PC-3 (cell line): ENCODE measurements at regions of chr4 and their contacts with region 1.

Region 1: GRCh38 chr4:169225058-169225751 is 45.6 kb downstream of the SH3RF1 start:
- DNase-seq: peak; percentile 90
- ATAC-seq: peak; percentile 84
- H3K4me3 ChIP-seq: peak overlapping the region; percentile 52
- H3K27ac ChIP-seq: peak overlapping the region; percentile 99
- H3K4me1 ChIP-seq: peaks cover 49% of the 10 kb centered on the region
- H3K27me3 ChIP-seq: no peaks in the 10 kb centered on the region
- CTCF ChIP-seq: no peak

Region 2: DNA sequence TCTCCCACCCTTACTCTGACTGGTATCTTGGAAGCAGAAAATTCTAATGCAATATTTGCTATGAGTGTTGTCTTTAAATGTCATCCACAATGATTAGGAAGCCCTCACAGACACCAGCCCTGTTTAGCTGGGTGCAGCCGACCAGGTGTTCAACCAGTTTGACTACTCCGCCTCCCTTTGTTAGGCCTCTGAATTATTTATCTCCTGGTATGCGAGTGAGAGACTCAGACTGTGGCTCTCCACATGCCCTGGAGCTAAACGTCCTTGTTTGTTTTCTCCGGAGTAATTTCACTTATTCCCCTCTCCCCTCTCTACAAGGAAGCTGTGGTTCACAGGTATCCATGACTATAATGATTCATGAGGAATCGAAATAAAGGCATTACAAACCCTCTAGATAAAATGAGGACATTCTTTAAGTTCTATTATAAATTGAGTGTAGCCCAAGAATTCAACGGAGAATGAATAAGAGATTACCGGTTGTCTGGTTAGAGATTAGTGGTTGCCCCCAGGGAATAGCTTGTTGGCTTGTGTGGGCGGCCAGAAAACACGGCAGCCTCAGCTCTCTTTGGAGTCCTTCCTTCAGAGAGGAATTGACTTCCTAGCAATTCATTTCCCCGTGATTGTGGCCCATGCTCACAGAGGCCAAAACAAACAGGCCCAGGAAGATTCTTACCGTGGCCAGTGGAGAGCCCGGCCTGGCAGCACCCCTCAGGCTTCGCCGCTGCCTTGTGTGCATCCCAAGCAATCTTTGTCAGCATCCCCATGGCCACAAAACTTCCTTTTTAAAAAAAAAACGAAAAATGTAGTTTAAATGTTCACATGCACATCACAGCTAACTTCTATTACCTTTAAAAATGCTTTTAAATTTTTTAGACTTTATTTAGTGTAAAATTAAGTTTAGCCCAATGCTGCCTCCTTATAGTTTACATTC is 155.0 kb before region 1 on chr4:
- CTCF ChIA-PET with region 1: no interaction called
- POLR2A ChIA-PET with region 1: no interaction called
- intact Hi-C with region 1: loop called (anchors 1 kb)
- DNase-seq: peak; percentile 97
- ATAC-seq: peak; percentile 88
- H3K4me3 ChIP-seq: peak overlapping the region; percentile 47
- H3K27ac ChIP-seq: peak overlapping the region; percentile 99
- H3K4me1 ChIP-seq: peaks cover 32% of the 10 kb centered on the region
- H3K27me3 ChIP-seq: no peaks in the 10 kb centered on the region
- CTCF ChIP-seq: no peak

Region 3: GRCh38 chr4:169249214-169249973 is 24.2 kb after region 1 on chr4:
- CTCF ChIA-PET with region 1: no interaction called
- POLR2A ChIA-PET with region 1: interaction called, 3 read pairs
- intact Hi-C with region 1: loop called (anchors 1 kb)
- DNase-seq: peak; percentile 82
- ATAC-seq: peak; percentile 83
- H3K4me3 ChIP-seq: peak overlapping the region; percentile 45
- H3K27ac ChIP-seq: peak overlapping the region; percentile 86
- H3K4me1 ChIP-seq: peaks cover 55% of the 10 kb centered on the region
- H3K27me3 ChIP-seq: no peaks in the 10 kb centered on the region
- CTCF ChIP-seq: no peak

Region 4: GRCh38 chr4:169327951-169328350 is 102.7 kb after region 1 on chr4:
- CTCF ChIA-PET with region 1: no interaction called
- POLR2A ChIA-PET with region 1: no interaction called
- intact Hi-C with region 1: no loop called
- DNase-seq: no peak
- ATAC-seq: no peak
- H3K4me3 ChIP-seq: no peak overlapping the region
- H3K27ac ChIP-seq: no peak overlapping the region
- H3K4me1 ChIP-seq: no peaks in the 10 kb centered on the region
- H3K27me3 ChIP-seq: no peaks in the 10 kb centered on the region
- CTCF ChIP-seq: no peak